ENCODE measurements at regions of chr1 and their contacts with region 1.

Region 1: GRCh38 chr1:101520302-101520701 is 283.5 kb downstream of the S1PR1 start:
- DNase-seq: no peak
- H3K4me3 ChIP-seq: no peak overlapping the region
- H3K27ac ChIP-seq: no peak overlapping the region
- H3K4me1 ChIP-seq: no peaks in the 10 kb centered on the region
- H3K27me3 ChIP-seq: no peaks in the 10 kb centered on the region
- CTCF ChIP-seq: peak in 9 of 11 experiments; percentile 31 to 67 (median 59)
- POLR2A ChIP-seq: no peak

Region 2: GRCh38 chr1:103514920-103515503 is 1994.7 kb after region 1 on chr1:
- intact Hi-C with region 1: loop called (anchors 10 kb)
- DNase-seq: no peak
- H3K4me3 ChIP-seq: no peak overlapping the region
- H3K27ac ChIP-seq: no peak overlapping the region
- H3K4me1 ChIP-seq: peaks cover 0 to 6% (median 2%) of the 10 kb centered on the region in 6 donors
- H3K27me3 ChIP-seq: no peaks in the 10 kb centered on the region
- CTCF ChIP-seq: peak; percentile 20 to 78 (median 70)
- POLR2A ChIP-seq: no peak

Measured in spleen (tissue), 13 donors.